Natural killer cell (primary cell): ENCODE measurements at regions of chr17 and their contacts with region 1.

Region 1: DNA sequence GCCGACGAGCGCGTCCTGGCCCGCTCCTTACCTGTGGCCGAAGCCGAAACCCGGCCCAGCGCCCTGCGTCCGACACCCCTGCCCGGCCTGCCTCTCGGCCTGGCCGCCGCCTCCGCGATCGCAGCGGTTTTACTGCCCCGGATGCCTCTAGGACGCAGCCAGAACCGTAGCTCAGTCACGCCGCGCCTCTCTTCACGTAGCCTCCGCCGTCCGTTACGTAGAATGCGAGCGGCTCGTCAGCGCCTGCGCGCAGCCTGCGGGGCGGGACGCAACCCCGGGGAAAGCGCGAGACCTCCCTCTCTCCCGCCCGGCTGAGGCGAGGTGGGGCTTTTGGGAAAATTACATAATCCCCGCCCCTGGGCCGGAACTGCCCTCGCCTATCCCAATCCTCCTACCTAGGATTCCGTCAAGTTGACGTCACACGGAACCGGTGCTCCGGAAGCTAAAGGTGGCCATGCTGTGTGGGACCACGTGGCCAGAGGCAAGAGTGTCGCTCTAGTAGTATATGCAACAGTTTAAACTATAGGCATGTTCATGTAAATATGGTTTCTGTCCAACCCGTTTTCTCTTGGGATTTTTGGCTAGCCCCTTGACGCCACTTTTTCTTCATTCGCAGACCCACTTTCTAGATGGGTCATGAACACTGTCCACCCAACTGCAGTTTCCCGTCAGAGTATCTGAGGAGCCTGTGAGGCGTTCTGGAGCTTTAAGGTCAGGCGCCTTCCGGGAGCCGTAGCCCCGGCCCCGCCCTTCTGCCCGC is at the start of gene CCDC47:
- DNase-seq: peak; percentile 93 to 99
- ATAC-seq: peak; percentile 81 to 94 (median 84)
- H3K4me3 ChIP-seq: peak within 1 kb of the TSS; percentile 88
- H3K4me3 Mint-ChIP-seq: peak within 1 kb of the TSS; percentile 95
- H3K27ac ChIP-seq: peak within 1 kb of the TSS; percentile 94
- H3K27ac Mint-ChIP-seq: peak within 1 kb of the TSS; percentile 98 to 99
- H3K4me1 ChIP-seq: peaks cover 22% of the 10 kb centered on the region
- H3K4me1 Mint-ChIP-seq: peaks cover 51 to 65% of the 10 kb centered on the region in 2 donors
- H3K27me3 ChIP-seq: no peaks in the 10 kb centered on the region
- H3K27me3 Mint-ChIP-seq: no peaks in the 10 kb centered on the region
- CTCF ChIP-seq: no peak
- total RNA-seq, gene CCDC47: 37.9 to 45.2 (median 41.7) TPM

Region 2: GRCh38 chr17:63621766-63622519 is 151.6 kb before region 1 on chr17 and contains the start of gene MAP3K3:
- intact Hi-C with region 1: loop called (anchors 5 kb)
- DNase-seq: peak; percentile 92 to 99
- ATAC-seq: peak; percentile 88 to 97 (median 88)
- H3K4me3 ChIP-seq: peak within 1 kb of the TSS; percentile 72
- H3K4me3 Mint-ChIP-seq: peak within 1 kb of the TSS; percentile 99
- H3K27ac ChIP-seq: peak within 1 kb of the TSS; percentile 68
- H3K27ac Mint-ChIP-seq: peak within 1 kb of the TSS; percentile 83 to 91
- H3K4me1 ChIP-seq: peaks cover 13% of the 10 kb centered on the region
- H3K4me1 Mint-ChIP-seq: peaks cover 36 to 43% of the 10 kb centered on the region in 2 donors
- H3K27me3 ChIP-seq: no peaks in the 10 kb centered on the region
- H3K27me3 Mint-ChIP-seq: no peaks in the 10 kb centered on the region
- CTCF ChIP-seq: no peak
- total RNA-seq, gene MAP3K3: 82.0 to 89.2 (median 88.5) TPM

Region 3: GRCh38 chr17:63741221-63742049 is 32.1 kb before region 1 on chr17 and contains the start of gene STRADA:
- intact Hi-C with region 1: loop called (anchors 1 kb)
- DNase-seq: peak; percentile 96 to 99
- ATAC-seq: peak; percentile 94 to 99 (median 94)
- H3K4me3 ChIP-seq: peak within 1 kb of the TSS; percentile 77
- H3K4me3 Mint-ChIP-seq: peak within 1 kb of the TSS; percentile 94
- H3K27ac ChIP-seq: peak within 1 kb of the TSS; percentile 81
- H3K27ac Mint-ChIP-seq: peak within 1 kb of the TSS; percentile 96 to 97
- H3K4me1 ChIP-seq: peaks cover 22% of the 10 kb centered on the region
- H3K4me1 Mint-ChIP-seq: peaks cover 25 to 27% of the 10 kb centered on the region in 2 donors
- H3K27me3 ChIP-seq: no peaks in the 10 kb centered on the region
- H3K27me3 Mint-ChIP-seq: no peaks in the 10 kb centered on the region
- CTCF ChIP-seq: no peak
- total RNA-seq, gene STRADA: 72.6 to 83.1 (median 78.2) TPM

Region 4: DNA sequence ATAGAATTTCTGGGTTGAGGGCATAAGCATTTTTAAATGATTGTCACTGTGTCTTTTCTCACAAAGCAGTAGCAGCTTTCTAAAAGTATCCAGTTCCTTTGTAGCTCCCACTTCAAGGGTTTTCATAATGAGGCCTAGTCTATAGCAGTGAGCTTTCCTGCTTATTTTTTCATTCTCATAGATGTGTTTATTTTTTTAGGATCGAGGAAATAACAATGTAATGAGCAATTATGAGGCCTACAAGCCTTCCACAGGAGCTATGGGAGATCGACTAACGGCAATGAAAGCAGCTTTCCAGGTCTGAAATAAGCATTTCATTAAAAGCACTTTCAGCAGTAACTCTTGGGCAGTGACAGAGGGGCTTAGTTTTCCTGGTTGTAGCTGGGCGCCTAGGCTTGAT is 43.1 kb after region 1 on chr17:
- intact Hi-C with region 1: no loop called
- DNase-seq: no peak
- ATAC-seq: no peak
- H3K4me3 ChIP-seq: no peak overlapping the region
- H3K4me3 Mint-ChIP-seq: no peak overlapping the region
- H3K27ac ChIP-seq: no peak overlapping the region
- H3K27ac Mint-ChIP-seq: no peak overlapping the region
- H3K4me1 ChIP-seq: peaks cover 5% of the 10 kb centered on the region
- H3K4me1 Mint-ChIP-seq: peaks cover 3 to 9% of the 10 kb centered on the region in 2 donors
- H3K27me3 ChIP-seq: no peaks in the 10 kb centered on the region
- H3K27me3 Mint-ChIP-seq: no peaks in the 10 kb centered on the region
- CTCF ChIP-seq: no peak

Region 5: GRCh38 chr17:63827002-63827771 is 53.6 kb after region 1 on chr17 and contains the starts of genes FTSJ3 and PSMC5:
- intact Hi-C with region 1: loop called (anchors 1 kb)
- DNase-seq: peak; percentile 89 to 98
- ATAC-seq: peak; percentile 89 to 97 (median 93)
- H3K4me3 ChIP-seq: peak within 1 kb of the TSS; percentile 78
- H3K4me3 Mint-ChIP-seq: peak within 1 kb of the TSS; percentile 99
- H3K27ac ChIP-seq: peak within 1 kb of the TSS; percentile 91
- H3K27ac Mint-ChIP-seq: peak within 1 kb of the TSS; percentile 96 to 99
- H3K4me1 ChIP-seq: peaks cover 35% of the 10 kb centered on the region
- H3K4me1 Mint-ChIP-seq: peaks cover 30 to 55% of the 10 kb centered on the region in 2 donors
- H3K27me3 ChIP-seq: no peaks in the 10 kb centered on the region
- H3K27me3 Mint-ChIP-seq: no peaks in the 10 kb centered on the region
- CTCF ChIP-seq: peak; percentile 47
- total RNA-seq, gene FTSJ3: 35.2 to 53.5 (median 51.6) TPM
- total RNA-seq, gene PSMC5: 91.3 to 114 (median 100) TPM

Region 6: DNA sequence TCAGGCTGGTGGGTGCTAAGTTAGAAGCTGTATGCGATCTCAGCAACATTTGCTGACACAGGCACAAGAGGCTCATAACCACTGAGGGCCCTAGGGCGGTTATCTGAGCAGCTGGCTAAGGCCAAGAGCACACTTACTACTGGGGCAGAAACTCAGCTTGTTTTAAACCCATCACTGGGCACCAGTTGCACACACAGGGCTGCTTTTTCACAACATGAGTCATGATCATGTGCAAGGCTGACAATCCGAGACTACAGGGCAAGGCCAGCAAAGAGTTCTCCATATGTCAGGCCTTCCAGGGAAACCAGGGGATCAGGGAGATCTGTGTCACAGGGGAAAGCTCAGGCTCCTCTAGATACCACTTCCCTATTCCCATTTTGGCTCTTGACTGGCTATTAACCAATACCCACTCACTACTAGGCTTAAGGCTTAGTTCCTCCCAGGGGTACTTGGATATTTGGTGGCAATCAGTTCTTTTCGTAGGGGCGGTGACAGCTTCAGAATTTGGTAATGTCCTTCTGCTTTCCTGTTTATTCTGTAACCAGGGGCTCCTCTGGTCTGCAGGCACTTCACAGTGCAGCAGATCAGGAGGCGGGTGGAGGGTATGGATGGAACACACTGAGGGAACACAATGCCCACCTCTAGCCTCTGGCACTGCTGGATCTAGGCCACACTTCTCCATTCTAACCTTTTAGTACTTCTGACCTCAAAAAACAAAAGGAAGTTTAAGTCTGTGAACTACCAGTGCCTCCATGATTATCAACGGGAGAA is 401.3 kb after region 1 on chr17:
- intact Hi-C with region 1: no loop called
- DNase-seq: peak in 1 of 2 donors; percentile 14
- ATAC-seq: peak in 1 of 3 donors; percentile 54
- H3K4me3 ChIP-seq: no peak overlapping the region
- H3K4me3 Mint-ChIP-seq: no peak overlapping the region
- H3K27ac ChIP-seq: no peak overlapping the region
- H3K27ac Mint-ChIP-seq: no peak overlapping the region
- H3K4me1 ChIP-seq: peaks cover 5% of the 10 kb centered on the region
- H3K4me1 Mint-ChIP-seq: no peaks in the 10 kb centered on the region
- H3K27me3 ChIP-seq: no peaks in the 10 kb centered on the region
- H3K27me3 Mint-ChIP-seq: no peaks in the 10 kb centered on the region
- CTCF ChIP-seq: no peak

Region 7: GRCh38 chr17:64506576-64507477 is 733.3 kb after region 1 on chr17 and contains the start of gene CEP95:
- intact Hi-C with region 1: loop called (anchors 5 kb)
- DNase-seq: peak; percentile 95 to 98
- ATAC-seq: peak; percentile 58 to 83 (median 72)
- H3K4me3 ChIP-seq: peak within 1 kb of the TSS; percentile 85
- H3K4me3 Mint-ChIP-seq: peak within 1 kb of the TSS; percentile 95
- H3K27ac ChIP-seq: peak within 1 kb of the TSS; percentile 94
- H3K27ac Mint-ChIP-seq: peak within 1 kb of the TSS; percentile 97 to 99
- H3K4me1 ChIP-seq: peaks cover 12% of the 10 kb centered on the region
- H3K4me1 Mint-ChIP-seq: peaks cover 62 to 67% of the 10 kb centered on the region in 2 donors
- H3K27me3 ChIP-seq: no peaks in the 10 kb centered on the region
- H3K27me3 Mint-ChIP-seq: no peaks in the 10 kb centered on the region
- CTCF ChIP-seq: no peak
- total RNA-seq, gene CEP95: 152 to 187 (median 186) TPM